ENCODE measurements at regions of chrX and their contacts with region 1.

Region 1: DNA sequence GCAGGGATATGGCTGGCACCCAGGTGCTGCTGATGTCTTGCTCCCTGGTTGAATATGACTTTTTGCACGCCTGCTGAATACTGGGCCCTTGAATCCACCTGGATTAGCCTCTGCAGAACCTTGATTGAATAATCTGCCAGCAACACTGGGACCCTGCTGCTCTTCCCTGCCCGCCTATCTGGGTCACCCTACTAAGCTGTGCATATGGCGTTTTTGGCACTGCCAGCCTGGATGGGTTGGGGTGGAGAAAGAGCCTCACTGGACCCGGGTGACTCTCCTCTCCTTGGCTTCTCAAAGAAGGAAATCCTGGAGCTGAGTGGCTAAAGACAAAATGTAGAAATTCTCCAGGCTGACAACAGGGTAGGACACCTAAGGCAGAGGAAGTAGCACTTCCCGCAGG is 100.0 kb downstream of the MAOA start:
- DNase-seq: no peak
- H3K4me3 ChIP-seq: no peak overlapping the region
- H3K27ac ChIP-seq: no peak overlapping the region
- H3K4me1 ChIP-seq: no peaks in the 10 kb centered on the region
- H3K27me3 ChIP-seq: no peaks in the 10 kb centered on the region
- CTCF ChIP-seq: no peak
- POLR2A ChIP-seq: no peak

Region 2: DNA sequence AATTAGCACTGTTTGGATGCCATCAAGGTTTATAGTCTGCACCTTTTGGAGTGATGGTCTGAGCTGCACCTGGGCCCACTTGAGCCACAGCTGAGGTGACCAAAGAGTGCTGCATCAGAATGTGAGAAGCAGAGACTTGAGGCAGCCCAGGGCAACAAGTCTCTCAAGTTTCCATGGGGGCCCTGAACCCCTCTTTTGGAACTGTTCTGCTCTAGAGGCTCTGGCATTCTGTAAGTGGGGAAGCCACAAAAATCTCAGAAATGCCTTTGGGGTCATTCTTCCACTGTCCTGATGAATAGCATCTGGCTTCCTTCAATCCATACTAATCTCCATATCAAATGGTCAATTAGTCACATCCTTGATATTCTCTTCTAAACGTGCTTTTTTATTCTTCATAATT is 398.3 kb before region 1 on chrX:
- intact Hi-C with region 1: no loop called
- DNase-seq: no peak
- H3K4me3 ChIP-seq: no peak overlapping the region
- H3K27ac ChIP-seq: no peak overlapping the region
- H3K4me1 ChIP-seq: no peaks in the 10 kb centered on the region
- H3K27me3 ChIP-seq: no peaks in the 10 kb centered on the region
- CTCF ChIP-seq: no peak
- POLR2A ChIP-seq: no peak

Region 3: DNA sequence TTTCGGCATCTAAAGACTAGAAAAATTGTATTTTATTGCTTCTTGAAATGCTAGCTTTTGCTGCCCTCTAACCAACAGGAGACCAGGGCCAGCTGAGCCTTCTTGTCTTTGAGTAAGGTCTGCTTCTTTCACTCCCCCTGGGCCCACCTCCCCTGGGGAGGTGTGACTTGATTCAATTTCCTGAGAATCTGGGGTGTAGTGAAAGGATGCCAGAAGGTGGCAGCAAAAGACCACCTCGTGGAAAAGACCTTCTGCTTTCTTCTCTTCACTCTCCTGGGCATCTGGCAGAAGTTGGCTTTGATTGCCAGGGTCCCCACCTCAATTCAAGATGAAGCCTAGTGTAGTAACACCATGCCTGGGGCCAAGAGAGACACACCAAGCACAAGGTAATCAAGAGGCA is 196.4 kb before region 1 on chrX:
- intact Hi-C with region 1: loop called (anchors 5 kb)
- DNase-seq: peak; percentile 38
- H3K4me3 ChIP-seq: no peak overlapping the region
- H3K27ac ChIP-seq: no peak overlapping the region
- H3K4me1 ChIP-seq: no peaks in the 10 kb centered on the region
- H3K27me3 ChIP-seq: no peaks in the 10 kb centered on the region
- CTCF ChIP-seq: peak in 2 of 3 experiments; percentile 27 to 39
- POLR2A ChIP-seq: no peak

Region 4: GRCh38 chrX:43836435-43837184 is 80.5 kb after region 1 on chrX:
- intact Hi-C with region 1: no loop called
- DNase-seq: no peak
- H3K4me3 ChIP-seq: no peak overlapping the region
- H3K27ac ChIP-seq: no peak overlapping the region
- H3K4me1 ChIP-seq: no peaks in the 10 kb centered on the region
- H3K27me3 ChIP-seq: no peaks in the 10 kb centered on the region
- CTCF ChIP-seq: peak; percentile 15 to 58 (median 38)
- POLR2A ChIP-seq: no peak

Region 5: GRCh38 chrX:43910012-43910411 is 153.9 kb after region 1 on chrX:
- intact Hi-C with region 1: no loop called
- DNase-seq: no peak
- H3K4me3 ChIP-seq: no peak overlapping the region
- H3K27ac ChIP-seq: no peak overlapping the region
- H3K4me1 ChIP-seq: no peaks in the 10 kb centered on the region
- H3K27me3 ChIP-seq: no peaks in the 10 kb centered on the region
- CTCF ChIP-seq: no peak
- POLR2A ChIP-seq: no peak